Left ventricle myocardium superior (tissue), 1 donor: ENCODE measurements at regions of chr12 and their contacts with region 1.

Region 1: DNA sequence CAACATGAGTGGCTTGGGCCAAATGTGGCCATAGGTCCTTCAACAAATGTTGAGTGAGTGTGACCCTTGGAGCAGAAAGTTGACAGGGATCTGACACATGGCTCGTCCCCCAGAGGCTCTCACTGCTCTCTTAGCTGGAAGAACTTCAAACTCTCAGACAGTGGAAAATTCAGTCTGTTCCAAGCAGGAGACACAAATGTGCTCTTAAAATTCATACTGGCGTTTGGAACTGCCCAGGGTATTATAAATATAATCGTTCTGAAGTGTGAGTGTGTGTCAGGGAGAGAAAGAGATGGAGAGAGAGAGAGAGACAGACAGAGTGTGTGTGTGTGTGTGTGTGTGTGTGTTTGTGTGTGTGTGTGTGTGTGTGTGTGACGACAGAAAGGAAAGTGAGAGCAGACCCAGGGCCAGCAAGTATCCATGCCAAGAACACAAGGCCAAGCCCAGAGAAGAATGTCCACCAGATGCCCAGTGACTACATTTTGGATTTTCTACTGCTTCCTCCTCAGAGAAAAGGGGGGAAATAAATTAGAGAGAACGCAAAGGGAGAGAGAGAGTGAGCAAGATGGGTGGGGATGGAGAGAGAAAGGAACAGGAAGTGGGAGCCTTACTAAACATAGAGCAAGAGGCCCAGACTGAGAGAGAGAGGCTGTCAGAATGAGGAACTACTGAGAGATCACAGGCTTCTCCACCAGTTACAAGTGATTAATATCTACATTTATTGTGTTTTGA is 193.6 kb upstream of the NUDT4 start:
- DNase-seq: peak; percentile 61
- ATAC-seq: peak; percentile 90

Region 2: GRCh38 chr12:93127582-93128331 is 56.3 kb before region 1 on chr12:
- intact Hi-C with region 1: loop called (anchors 5 kb)
- DNase-seq: peak; percentile 86
- ATAC-seq: peak; percentile 92

Region 3: GRCh38 chr12:93256256-93256969 is 72.3 kb after region 1 on chr12:
- intact Hi-C with region 1: no loop called
- DNase-seq: no peak
- ATAC-seq: peak; percentile 55